ENCODE measurements at regions of chr14 and their contacts with region 1.

Region 1: GRCh38 chr14:23068476-23069412 is 11.4 kb upstream of the CDH24 start:
- DNase-seq: peak; percentile 89
- H3K4me3 ChIP-seq: no peak overlapping the region
- H3K4me3 Mint-ChIP-seq: peak overlapping the region; percentile 42
- H3K27ac Mint-ChIP-seq: peak overlapping the region; percentile 60
- H3K4me1 ChIP-seq: peaks cover 13% of the 10 kb centered on the region
- H3K4me1 Mint-ChIP-seq: peaks cover 32% of the 10 kb centered on the region
- H3K27me3 ChIP-seq: no peaks in the 10 kb centered on the region
- H3K27me3 Mint-ChIP-seq: no peaks in the 10 kb centered on the region
- CTCF ChIP-seq: peak; percentile 95 to 98

Region 2: GRCh38 chr14:22994762-22995275 is 73.9 kb before region 1 on chr14:
- CTCF ChIA-PET with region 1: interaction called, 31 read pairs
- POLR2A ChIA-PET with region 1: no interaction called
- intact Hi-C with region 1: no loop called
- DNase-seq: peak in 1 of 2 experiments; percentile 56
- H3K4me3 ChIP-seq: no peak overlapping the region
- H3K4me3 Mint-ChIP-seq: peak overlapping the region; percentile 12
- H3K27ac Mint-ChIP-seq: peak overlapping the region; percentile 51
- H3K4me1 ChIP-seq: peaks cover 10% of the 10 kb centered on the region
- H3K4me1 Mint-ChIP-seq: peaks cover 3% of the 10 kb centered on the region
- H3K27me3 ChIP-seq: no peaks in the 10 kb centered on the region
- H3K27me3 Mint-ChIP-seq: no peaks in the 10 kb centered on the region
- CTCF ChIP-seq: peak; percentile 58 to 60

Region 3: GRCh38 chr14:23006544-23007419 is 62.0 kb before region 1 on chr14:
- CTCF ChIA-PET with region 1: interaction called, 27 read pairs
- POLR2A ChIA-PET with region 1: interaction called, 3 read pairs
- intact Hi-C with region 1: no loop called
- DNase-seq: peak; percentile 97
- H3K4me3 ChIP-seq: peak overlapping the region; percentile 63
- H3K4me3 Mint-ChIP-seq: peak overlapping the region; percentile 100
- H3K27ac Mint-ChIP-seq: peak overlapping the region; percentile 99
- H3K4me1 ChIP-seq: peaks cover 14% of the 10 kb centered on the region
- H3K4me1 Mint-ChIP-seq: peaks cover 15% of the 10 kb centered on the region
- H3K27me3 ChIP-seq: no peaks in the 10 kb centered on the region
- H3K27me3 Mint-ChIP-seq: no peaks in the 10 kb centered on the region
- CTCF ChIP-seq: peak; percentile 13 to 44

Region 4: DNA sequence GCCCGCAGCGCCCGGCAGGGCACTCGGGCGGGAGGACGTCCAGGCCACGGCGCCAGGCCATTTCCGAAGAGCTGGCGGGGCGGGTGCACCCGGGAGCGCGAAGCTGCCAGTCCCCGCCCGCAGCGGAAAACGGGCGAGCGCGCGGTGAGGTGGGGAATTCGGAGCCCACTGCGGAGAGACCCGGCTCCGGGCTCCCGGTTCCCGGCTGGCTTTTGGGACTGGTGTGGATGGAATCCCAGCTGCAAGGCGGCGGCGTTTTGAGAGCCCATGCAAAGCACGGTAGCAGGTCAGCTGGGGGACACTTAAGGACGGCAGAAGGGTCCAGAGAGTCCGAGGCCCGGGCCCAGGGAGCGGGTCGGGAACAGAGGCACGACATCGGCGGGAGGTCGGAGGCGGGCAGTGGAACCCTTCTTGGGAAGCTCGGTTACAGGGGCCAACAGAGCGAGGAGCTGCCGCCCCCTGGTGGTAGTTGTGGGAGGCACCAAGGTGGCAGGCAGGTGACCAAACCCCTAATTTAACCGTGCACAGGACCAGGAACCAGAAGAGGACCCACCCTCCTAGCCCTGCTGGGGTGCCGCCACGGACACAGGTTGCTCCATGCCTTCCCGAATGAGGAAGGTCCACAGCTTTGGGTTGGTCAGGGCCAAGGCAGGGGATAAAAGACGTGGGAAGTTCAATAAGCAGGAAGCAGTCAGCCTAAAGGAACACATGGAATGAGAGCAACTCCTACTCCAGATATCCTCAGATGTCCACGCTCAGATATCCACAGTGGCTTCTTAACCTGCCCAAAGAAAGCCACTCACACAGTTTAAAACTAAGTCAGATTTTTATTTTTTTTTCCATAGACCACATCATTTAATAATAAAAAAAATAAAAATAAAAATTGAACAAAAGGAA is 10.7 kb before region 1 on chr14:
- CTCF ChIA-PET with region 1: interaction called, 48 read pairs
- POLR2A ChIA-PET with region 1: interaction called, 12 read pairs
- intact Hi-C with region 1: no loop called
- DNase-seq: peak; percentile 91 to 94
- H3K4me3 ChIP-seq: peak overlapping the region; percentile 56
- H3K4me3 Mint-ChIP-seq: peak overlapping the region; percentile 85
- H3K27ac Mint-ChIP-seq: peak overlapping the region; percentile 68
- H3K4me1 ChIP-seq: peaks cover 18% of the 10 kb centered on the region
- H3K4me1 Mint-ChIP-seq: peaks cover 23% of the 10 kb centered on the region
- H3K27me3 ChIP-seq: no peaks in the 10 kb centered on the region
- H3K27me3 Mint-ChIP-seq: no peaks in the 10 kb centered on the region
- CTCF ChIP-seq: peak; percentile 93 to 96

Region 5: DNA sequence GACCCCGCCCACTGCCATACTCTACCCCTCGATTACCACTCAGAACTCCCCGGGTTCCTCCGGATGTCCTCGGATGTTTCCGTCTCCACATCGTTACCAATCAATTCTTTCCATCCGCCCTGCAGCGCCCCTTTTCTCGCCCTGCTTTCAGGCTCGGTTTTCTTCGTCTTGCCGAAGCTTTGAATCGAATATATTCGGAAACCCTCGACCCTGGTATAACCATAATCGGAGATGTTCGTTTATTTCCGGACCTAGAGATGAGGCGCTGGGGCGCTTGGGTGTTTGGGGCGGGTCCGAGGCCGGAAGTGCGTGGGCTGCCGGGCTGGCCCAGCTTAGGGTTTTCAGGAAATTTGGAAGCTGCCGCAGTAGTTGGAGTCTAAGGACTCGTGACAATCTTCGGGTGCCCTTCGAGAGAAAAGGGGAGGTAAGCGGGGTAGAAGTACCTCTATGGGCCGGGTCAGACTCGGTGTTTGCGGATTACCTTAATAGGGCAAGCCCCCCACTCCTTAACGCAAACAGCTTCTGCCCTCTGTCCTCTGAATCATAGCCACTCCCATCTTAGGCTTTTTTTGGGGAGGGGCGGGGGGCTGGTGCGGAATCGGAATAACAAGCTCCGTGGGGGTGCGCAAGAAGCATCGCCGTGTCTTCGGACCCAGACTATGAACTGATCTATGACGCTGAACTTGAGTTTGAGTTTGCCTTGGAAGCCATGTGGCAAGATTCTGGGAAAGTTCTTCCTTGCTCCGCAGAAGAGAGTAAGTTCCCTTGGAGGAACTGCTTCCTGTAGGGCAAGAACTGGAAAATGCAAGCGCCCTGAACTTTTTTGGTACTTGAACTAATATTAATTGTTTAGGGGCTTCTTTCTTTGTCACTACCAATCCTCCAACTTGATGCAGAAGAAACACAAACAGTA is 26.7 kb after region 1 on chr14 and contains the start of gene C14orf119:
- CTCF ChIA-PET with region 1: interaction called, 110 read pairs
- POLR2A ChIA-PET with region 1: interaction called, 23 read pairs
- intact Hi-C with region 1: loop called (anchors 2 kb)
- DNase-seq: peak; percentile 98 to 99
- H3K4me3 ChIP-seq: peak within 1 kb of the TSS; percentile 79
- H3K4me3 Mint-ChIP-seq: no peak within 1 kb of the TSS
- H3K27ac Mint-ChIP-seq: no peak within 1 kb of the TSS
- H3K4me1 ChIP-seq: peaks cover 3% of the 10 kb centered on the region; the same call in 1 of the 2 replicates
- H3K4me1 Mint-ChIP-seq: peaks cover 10% of the 10 kb centered on the region
- H3K27me3 ChIP-seq: no peaks in the 10 kb centered on the region
- H3K27me3 Mint-ChIP-seq: no peaks in the 10 kb centered on the region
- CTCF ChIP-seq: no peak
- total RNA-seq, gene C14orf119: 46.3 and 52.0 TPM in 2 replicates

Region 6: GRCh38 chr14:23113431-23114119 is 44.8 kb after region 1 on chr14:
- CTCF ChIA-PET with region 1: interaction called, 35 read pairs
- POLR2A ChIA-PET with region 1: interaction called, 3 read pairs
- intact Hi-C with region 1: loop called (anchors 1 kb)
- DNase-seq: no peak
- H3K4me3 ChIP-seq: no peak overlapping the region
- H3K4me3 Mint-ChIP-seq: no peak overlapping the region
- H3K27ac Mint-ChIP-seq: no peak overlapping the region
- H3K4me1 ChIP-seq: no peaks in the 10 kb centered on the region
- H3K4me1 Mint-ChIP-seq: no peaks in the 10 kb centered on the region
- H3K27me3 ChIP-seq: no peaks in the 10 kb centered on the region
- H3K27me3 Mint-ChIP-seq: no peaks in the 10 kb centered on the region
- CTCF ChIP-seq: no peak

Region 7: GRCh38 chr14:23186913-23187654 is 118.3 kb after region 1 on chr14:
- CTCF ChIA-PET with region 1: interaction called, 3 read pairs
- POLR2A ChIA-PET with region 1: no interaction called
- intact Hi-C with region 1: loop called (anchors 2 kb)
- DNase-seq: peak; percentile 53
- H3K4me3 ChIP-seq: no peak overlapping the region
- H3K4me3 Mint-ChIP-seq: no peak overlapping the region
- H3K27ac Mint-ChIP-seq: no peak overlapping the region
- H3K4me1 ChIP-seq: no peaks in the 10 kb centered on the region
- H3K4me1 Mint-ChIP-seq: peaks cover 5% of the 10 kb centered on the region
- H3K27me3 ChIP-seq: no peaks in the 10 kb centered on the region
- H3K27me3 Mint-ChIP-seq: no peaks in the 10 kb centered on the region
- CTCF ChIP-seq: peak; percentile 84 to 85